ENCODE measurements at regions of chr3 and their contacts with region 1.

Region 1: DNA sequence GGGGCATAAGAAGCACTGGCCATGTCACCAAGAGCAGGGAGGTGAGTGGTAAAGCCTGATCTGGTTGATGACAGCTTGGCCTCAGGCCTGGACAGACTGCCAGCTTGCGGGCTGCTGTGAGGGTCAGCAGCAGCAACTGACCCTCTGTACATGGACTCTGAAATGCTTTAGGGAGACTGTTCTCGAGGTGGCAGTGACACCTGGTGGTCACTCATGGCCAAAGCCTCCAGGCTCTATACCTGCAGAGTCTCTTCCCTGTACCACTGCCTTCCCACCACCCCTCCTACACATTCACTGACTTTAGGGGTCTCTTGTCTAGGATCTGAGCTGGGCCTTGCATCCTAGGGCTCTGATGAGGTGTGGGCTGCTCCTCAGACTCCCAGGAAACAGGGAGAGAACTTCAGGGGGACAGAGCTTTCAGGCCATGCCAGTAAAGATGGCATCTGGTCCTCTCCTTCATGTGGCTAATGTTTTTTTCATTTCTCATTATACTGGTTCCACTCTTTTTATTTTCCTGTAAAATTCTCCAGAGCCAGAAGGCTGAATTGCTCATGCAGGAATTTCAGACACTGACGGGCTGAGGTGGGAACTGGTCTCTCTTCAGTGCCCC is 17.2 kb upstream of the TIMP4 start:
- DNase-seq: peak; percentile 67
- CTCF ChIP-seq: peak; percentile 84

Region 2: GRCh38 chr3:12135029-12135657 is 40.8 kb before region 1 on chr3:
- CTCF ChIA-PET with region 1: interaction called, 141 read pairs
- POLR2A ChIA-PET with region 1: no interaction called
- DNase-seq: peak; percentile 60
- CTCF ChIP-seq: peak; percentile 87

Region 3: DNA sequence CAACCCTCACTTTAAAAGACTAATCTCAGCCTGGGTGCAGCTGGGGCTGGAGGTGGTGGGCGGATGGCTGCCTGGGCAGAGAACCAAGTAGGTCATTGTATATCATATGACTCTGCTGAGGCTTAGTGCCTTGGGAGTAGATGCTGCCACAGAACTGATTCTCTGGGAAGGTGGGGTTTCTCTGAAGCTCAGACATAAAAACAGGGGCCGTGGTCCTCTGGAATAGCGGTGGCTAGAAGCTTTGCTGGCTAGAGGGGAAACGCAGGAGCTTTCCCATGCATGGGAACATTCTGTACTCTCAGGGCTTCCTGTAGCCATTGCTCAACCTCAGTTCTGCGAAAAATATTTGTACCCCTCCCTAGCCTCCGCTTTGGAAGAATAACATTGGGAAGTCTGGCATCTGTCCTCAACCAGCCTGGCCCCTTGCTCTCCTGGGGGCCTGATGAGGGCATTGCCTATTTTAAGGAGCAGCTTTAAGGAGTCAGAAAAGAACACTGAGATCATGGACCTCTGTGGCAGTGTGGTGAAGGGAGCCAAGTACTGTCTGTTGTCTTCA is 31.9 kb before region 1 on chr3:
- CTCF ChIA-PET with region 1: interaction called, 141 read pairs
- POLR2A ChIA-PET with region 1: no interaction called
- DNase-seq: no peak
- CTCF ChIP-seq: no peak

Region 4: GRCh38 chr3:12158387-12159226 is 17.3 kb before region 1 on chr3 and contains the start of gene TIMP4:
- CTCF ChIA-PET with region 1: interaction called, 13 read pairs
- POLR2A ChIA-PET with region 1: no interaction called
- DNase-seq: no peak
- CTCF ChIP-seq: no peak

Region 5: DNA sequence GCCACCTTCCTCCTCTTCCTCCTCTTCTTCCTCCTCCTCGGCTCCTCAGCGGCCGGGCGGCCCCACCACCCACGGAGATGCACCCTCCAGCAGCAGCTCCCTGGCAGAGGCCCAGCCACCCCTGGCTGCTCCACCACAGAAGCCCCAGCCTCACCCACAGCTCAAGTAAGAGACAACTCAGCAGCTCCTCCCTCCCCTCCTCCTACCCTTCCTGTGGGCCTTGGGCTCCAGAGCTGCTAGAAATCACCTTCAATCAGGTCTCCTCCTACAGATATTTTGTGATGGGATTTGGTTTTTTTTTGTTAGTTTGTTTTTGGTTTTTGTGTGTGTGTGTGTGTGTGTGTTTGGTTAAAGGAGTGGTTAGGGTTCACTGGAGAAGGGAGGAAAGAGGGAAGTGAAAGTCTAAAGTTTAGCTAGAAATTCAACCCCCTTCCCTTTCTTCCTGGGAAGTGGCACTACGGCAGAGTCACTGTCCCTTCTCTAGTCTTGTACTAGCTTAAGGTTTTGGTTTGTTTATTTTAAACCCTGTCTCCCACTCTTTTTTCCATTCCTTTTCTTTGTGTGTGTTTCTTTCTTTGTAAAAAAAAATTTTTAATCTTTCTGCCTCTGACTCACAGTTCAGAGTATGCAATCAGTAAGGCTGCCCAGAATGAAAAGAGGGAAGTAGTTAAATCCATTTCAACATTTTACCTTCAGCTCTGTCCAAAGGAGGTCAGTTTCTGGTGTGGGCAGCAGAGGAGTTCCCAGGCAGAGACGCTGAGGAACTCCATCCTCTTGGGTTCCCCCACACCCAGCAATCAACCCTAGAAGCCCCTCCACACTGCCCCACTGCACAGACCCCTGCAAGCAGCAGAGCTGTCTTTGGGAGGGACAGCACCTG is 11.7 kb after region 1 on chr3:
- CTCF ChIA-PET with region 1: interaction called, 74 read pairs
- POLR2A ChIA-PET with region 1: no interaction called
- DNase-seq: peak; percentile 62
- CTCF ChIP-seq: no peak

Region 6: GRCh38 chr3:12193485-12194165 is 17.7 kb after region 1 on chr3:
- CTCF ChIA-PET with region 1: interaction called, 76 read pairs
- POLR2A ChIA-PET with region 1: no interaction called
- DNase-seq: peak; percentile 45
- CTCF ChIP-seq: no peak

Region 7: DNA sequence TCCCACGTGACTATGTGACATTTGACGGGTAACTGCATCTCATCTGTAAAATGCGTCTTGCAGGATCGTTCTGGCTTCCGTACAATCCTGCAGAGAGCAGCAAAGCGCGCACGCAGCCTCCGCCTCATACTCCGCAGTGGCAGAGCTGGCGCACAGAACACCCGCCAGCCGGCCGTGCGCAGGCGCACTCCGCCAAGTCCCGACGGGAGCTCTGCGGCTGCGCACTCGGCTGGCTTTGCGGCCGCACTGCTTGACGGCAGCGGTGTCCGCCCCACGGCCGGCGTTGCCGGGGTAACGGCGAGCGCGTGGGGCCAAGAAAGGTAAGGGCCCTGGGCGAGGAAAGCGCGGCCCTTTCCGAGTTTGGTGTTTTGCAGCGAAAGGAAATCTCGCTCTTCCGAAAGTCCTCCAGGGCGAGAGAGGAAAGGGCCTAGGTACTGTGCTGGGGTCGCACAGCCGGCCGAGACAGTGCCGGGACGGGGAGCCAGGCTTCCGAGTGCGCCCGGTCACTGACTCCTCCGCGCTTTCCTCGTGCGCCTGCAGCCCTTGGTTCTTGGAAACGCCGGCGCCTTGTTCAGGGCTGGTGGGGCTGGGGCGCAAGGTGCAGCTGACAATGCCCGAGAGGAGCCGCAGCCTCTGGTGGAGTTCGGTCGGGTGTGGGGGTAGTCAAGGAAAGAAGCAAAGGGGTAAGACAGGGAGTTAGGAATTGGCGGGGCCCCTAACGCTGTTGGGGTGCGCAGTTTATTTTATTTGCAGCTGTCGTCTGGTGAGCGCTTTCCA is 308.4 kb after region 1 on chr3 and contains the start of gene TSEN2:
- CTCF ChIA-PET with region 1: interaction called, 26 read pairs
- POLR2A ChIA-PET with region 1: no interaction called
- DNase-seq: peak; percentile 99
- CTCF ChIP-seq: peak; percentile 37

Measured in GM10248 (cell line).